PC-9 (cell line): ENCODE measurements at regions of chr14 and their contacts with region 1.

Region 1: GRCh38 chr14:101809671-101810514 is 48.4 kb downstream of the PPP2R5C start:
- DNase-seq: peak; percentile 94 to 99
- H3K4me3 ChIP-seq: peak overlapping the region; percentile 62
- H3K27ac ChIP-seq: peak overlapping the region; percentile 92
- H3K4me1 ChIP-seq: peaks cover 28% of the 10 kb centered on the region
- H3K27me3 ChIP-seq: no peaks in the 10 kb centered on the region
- CTCF ChIP-seq: no peak

Region 2: DNA sequence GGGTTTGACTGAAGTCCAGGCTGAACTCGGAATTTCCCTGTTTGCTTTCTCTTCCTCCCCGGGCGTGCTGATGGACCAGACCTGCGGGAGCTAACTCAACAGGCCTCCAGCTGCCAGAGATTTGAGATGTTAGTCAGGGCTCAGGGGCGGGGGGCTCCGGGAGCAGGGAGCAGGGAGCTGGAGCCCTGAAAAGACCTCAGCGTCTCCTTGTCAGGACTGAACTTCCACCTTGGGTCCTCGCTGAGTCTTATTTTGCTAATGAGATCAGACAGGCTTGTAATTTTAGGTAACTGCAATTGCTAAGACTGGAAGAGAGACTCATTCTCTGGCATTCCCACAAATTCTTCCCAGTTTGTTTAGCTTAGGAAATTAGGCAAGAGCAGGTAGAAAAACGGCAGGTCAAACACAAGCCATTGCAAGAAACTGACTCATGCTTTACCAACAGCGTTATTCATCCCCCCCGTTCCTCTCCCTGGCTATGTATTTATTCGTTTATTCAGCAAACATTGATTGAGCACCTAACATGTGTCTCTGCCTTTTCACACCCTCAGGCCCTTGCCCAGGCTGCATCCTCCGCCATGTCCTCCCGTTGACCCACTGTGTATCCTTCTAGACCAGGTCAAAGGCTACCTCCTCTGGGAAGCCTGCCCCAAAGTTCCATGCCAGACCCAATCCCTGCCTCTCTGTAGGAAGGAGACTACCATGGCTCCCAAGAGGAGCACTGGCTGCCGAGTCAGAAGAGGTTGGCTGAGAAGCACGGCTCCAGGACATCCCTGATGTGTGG is 329.0 kb before region 1 on chr14:
- CTCF ChIA-PET with region 1: no interaction called
- POLR2A ChIA-PET with region 1: interaction called, 10 read pairs
- intact Hi-C with region 1: no loop called
- DNase-seq: peak; percentile 45 to 98
- H3K4me3 ChIP-seq: peak overlapping the region; percentile 44; the same call in 1 of the 2 replicates
- H3K27ac ChIP-seq: peak overlapping the region; percentile 89
- H3K4me1 ChIP-seq: peaks cover 58% of the 10 kb centered on the region
- H3K27me3 ChIP-seq: no peaks in the 10 kb centered on the region
- CTCF ChIP-seq: no peak

Region 3: GRCh38 chr14:101774006-101774795 is 35.7 kb before region 1 on chr14:
- CTCF ChIA-PET with region 1: interaction called, 8 read pairs
- POLR2A ChIA-PET with region 1: interaction called, 7 read pairs
- intact Hi-C with region 1: loop called (anchors 1 kb)
- DNase-seq: no peak
- H3K4me3 ChIP-seq: no peak overlapping the region
- H3K27ac ChIP-seq: no peak overlapping the region
- H3K4me1 ChIP-seq: peaks cover 37% of the 10 kb centered on the region
- H3K27me3 ChIP-seq: no peaks in the 10 kb centered on the region
- CTCF ChIP-seq: no peak

Region 4: DNA sequence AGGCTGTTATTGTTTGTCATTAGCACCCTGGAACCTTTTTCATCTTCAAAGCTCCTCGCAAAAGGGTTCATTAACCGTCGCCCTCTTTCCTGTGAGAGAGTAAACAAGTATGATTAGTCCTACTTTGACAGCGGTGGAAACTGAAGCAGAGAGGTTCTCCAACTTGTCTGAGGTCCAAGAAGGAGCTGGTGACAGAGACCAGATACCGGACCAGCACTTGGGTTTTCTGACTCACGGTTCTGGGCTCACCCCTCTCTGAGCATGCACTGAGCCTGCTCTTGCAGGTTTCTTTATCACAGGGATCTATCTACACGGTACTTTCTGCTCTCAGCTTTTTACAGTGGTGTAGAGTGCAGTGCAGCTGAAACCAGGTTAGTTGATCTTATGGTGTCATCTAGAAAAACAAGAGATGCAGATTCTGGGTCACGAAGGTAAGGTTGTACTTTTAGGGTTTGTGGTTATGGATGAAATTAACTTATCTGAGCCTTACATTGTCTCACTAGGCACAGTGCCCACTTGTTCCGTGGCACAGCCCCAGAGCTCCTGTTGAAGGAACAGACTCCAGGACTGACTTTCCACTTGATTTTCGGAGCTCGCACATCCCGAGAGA is 13.7 kb after region 1 on chr14:
- CTCF ChIA-PET with region 1: interaction called, 5 read pairs
- POLR2A ChIA-PET with region 1: interaction called, 3 read pairs
- intact Hi-C with region 1: loop called (anchors 1 kb)
- DNase-seq: no peak
- H3K4me3 ChIP-seq: no peak overlapping the region
- H3K27ac ChIP-seq: no peak overlapping the region
- H3K4me1 ChIP-seq: no peaks in the 10 kb centered on the region
- H3K27me3 ChIP-seq: no peaks in the 10 kb centered on the region
- CTCF ChIP-seq: no peak

Region 5: GRCh38 chr14:101854366-101854765 is 44.5 kb after region 1 on chr14:
- CTCF ChIA-PET with region 1: no interaction called
- POLR2A ChIA-PET with region 1: no interaction called
- intact Hi-C with region 1: no loop called
- DNase-seq: no peak
- H3K4me3 ChIP-seq: no peak overlapping the region
- H3K27ac ChIP-seq: no peak overlapping the region
- H3K4me1 ChIP-seq: no peaks in the 10 kb centered on the region
- H3K27me3 ChIP-seq: no peaks in the 10 kb centered on the region
- CTCF ChIP-seq: no peak

Region 6: GRCh38 chr14:101889898-101890297 is 80.0 kb after region 1 on chr14:
- CTCF ChIA-PET with region 1: no interaction called
- POLR2A ChIA-PET with region 1: interaction called, 10 read pairs
- intact Hi-C with region 1: no loop called
- DNase-seq: peak in 1 of 2 experiments; percentile 46
- H3K4me3 ChIP-seq: no peak overlapping the region
- H3K27ac ChIP-seq: no peak overlapping the region
- H3K4me1 ChIP-seq: no peaks in the 10 kb centered on the region
- H3K27me3 ChIP-seq: no peaks in the 10 kb centered on the region
- CTCF ChIP-seq: peak; percentile 31; the same call in 1 of the 2 replicates

Region 7: DNA sequence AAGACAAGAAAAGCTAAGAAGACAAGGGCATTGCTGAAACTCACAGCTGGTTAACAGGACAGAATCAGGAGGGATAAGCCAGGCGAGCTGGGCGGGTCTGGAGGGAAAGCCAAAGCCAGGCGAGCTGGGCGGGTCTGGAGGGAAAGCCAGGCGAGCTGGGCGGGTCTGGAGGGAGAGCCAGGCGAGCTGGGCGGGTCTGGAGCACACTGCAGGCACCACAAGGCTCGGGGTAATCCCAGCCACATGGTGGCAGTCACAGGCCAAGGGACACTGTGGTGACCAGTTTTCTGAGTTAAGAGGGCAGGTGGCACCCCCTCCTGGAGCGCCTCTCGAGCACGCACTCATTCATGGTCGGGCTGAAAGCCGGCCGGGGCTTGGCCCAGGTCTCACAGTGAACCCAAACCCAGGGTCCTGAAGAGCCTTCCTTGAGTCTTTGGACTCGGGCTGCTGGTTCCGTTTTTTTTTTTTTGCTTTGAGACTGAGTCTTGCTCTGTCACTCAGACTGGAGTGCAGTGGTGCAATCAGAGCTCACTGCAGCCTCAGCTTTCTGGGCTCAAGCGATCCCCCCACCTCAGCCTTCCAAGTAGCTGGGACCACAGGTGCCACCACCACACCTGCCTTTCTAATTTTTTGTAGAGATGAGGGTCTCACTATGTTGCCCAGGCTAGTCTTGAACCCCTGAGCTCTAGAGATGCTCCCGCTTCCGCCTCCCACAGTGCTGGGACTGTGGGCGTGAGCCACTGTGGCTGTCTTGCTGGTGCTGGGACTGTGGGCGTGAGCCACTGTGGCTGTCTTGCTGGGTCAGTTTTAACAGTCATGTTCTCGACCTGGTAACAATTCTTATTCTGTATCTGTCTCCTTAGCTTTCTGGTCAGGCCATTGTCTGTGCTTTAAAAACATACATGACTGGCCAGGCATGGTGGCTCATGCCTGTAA is 236.7 kb after region 1 on chr14:
- CTCF ChIA-PET with region 1: interaction called, 4 read pairs
- POLR2A ChIA-PET with region 1: interaction called, 14 read pairs
- intact Hi-C with region 1: no loop called
- DNase-seq: peak; percentile 98 to 100
- H3K4me3 ChIP-seq: no peak overlapping the region
- H3K27ac ChIP-seq: no peak overlapping the region
- H3K4me1 ChIP-seq: peaks cover 3% of the 10 kb centered on the region
- H3K27me3 ChIP-seq: no peaks in the 10 kb centered on the region
- CTCF ChIP-seq: peak; percentile 84